Sigmoid colon (tissue), 7 donors: ENCODE measurements at regions of chr1 and their contacts with region 1.

Region 1: GRCh38 chr1:29171089-29171488 is 10.6 kb downstream of the SRSF4 start:
- DNase-seq: no peak
- H3K4me3 ChIP-seq: no peak overlapping the region
- H3K27ac ChIP-seq: peak overlapping the region in 1 of 4 donors; percentile 1
- H3K4me1 ChIP-seq: peaks cover 0 to 49% (median 42%) of the 10 kb centered on the region in 4 donors
- H3K27me3 ChIP-seq: no peaks in the 10 kb centered on the region
- CTCF ChIP-seq: no peak
- EP300 ChIP-seq: no peak
- POLR2A ChIP-seq: no peak

Region 2: GRCh38 chr1:29050166-29050565 is 120.9 kb before region 1 on chr1:
- intact Hi-C with region 1: loop called (anchors 10 kb)
- DNase-seq: no peak
- H3K4me3 ChIP-seq: no peak overlapping the region
- H3K27ac ChIP-seq: peak overlapping the region in 2 of 4 donors; percentile 11 to 16
- H3K4me1 ChIP-seq: peaks cover 0 to 37% (median 19%) of the 10 kb centered on the region in 4 donors
- H3K27me3 ChIP-seq: no peaks in the 10 kb centered on the region
- CTCF ChIP-seq: no peak
- EP300 ChIP-seq: no peak
- POLR2A ChIP-seq: no peak